SK-N-SH (cell line): ENCODE measurements at regions of chr12 and their contacts with region 1.

Region 1: GRCh38 chr12:3299929-3300832 is 190.8 kb upstream of the PRMT8 start:
- DNase-seq: peak; percentile 89
- H3K4me3 ChIP-seq: peak overlapping the region; percentile 15 to 56; a peak in 3 of 4 replicates
- H3K27ac ChIP-seq: peak overlapping the region in 1 of 2 experiments; percentile 69; a peak in 2 of 4 replicates
- H3K4me1 ChIP-seq: peaks cover 4 to 39% of the 10 kb centered on the region in 2 experiments; a peak in 3 of 4 replicates
- H3K27me3 ChIP-seq: no peaks in the 10 kb centered on the region
- CTCF ChIP-seq: peak; percentile 93
- EP300 ChIP-seq: peak in 1 of 2 experiments; percentile 51; a peak in 1 of 4 replicates
- RAD21 ChIP-seq: peak; percentile 87

Region 2: GRCh38 chr12:3135522-3136461 is 164.4 kb before region 1 on chr12:
- CTCF ChIA-PET with region 1: interaction called, 47 read pairs
- POLR2A ChIA-PET with region 1: no interaction called
- DNase-seq: peak; percentile 90
- H3K4me3 ChIP-seq: no peak overlapping the region; a peak in 1 of 4 replicates
- H3K27ac ChIP-seq: no peak overlapping the region
- H3K4me1 ChIP-seq: peaks cover 13 to 22% of the 10 kb centered on the region in 2 experiments; a peak in 3 of 4 replicates
- H3K27me3 ChIP-seq: no peaks in the 10 kb centered on the region
- CTCF ChIP-seq: peak; percentile 78
- EP300 ChIP-seq: no peak
- RAD21 ChIP-seq: peak; percentile 96

Region 3: DNA sequence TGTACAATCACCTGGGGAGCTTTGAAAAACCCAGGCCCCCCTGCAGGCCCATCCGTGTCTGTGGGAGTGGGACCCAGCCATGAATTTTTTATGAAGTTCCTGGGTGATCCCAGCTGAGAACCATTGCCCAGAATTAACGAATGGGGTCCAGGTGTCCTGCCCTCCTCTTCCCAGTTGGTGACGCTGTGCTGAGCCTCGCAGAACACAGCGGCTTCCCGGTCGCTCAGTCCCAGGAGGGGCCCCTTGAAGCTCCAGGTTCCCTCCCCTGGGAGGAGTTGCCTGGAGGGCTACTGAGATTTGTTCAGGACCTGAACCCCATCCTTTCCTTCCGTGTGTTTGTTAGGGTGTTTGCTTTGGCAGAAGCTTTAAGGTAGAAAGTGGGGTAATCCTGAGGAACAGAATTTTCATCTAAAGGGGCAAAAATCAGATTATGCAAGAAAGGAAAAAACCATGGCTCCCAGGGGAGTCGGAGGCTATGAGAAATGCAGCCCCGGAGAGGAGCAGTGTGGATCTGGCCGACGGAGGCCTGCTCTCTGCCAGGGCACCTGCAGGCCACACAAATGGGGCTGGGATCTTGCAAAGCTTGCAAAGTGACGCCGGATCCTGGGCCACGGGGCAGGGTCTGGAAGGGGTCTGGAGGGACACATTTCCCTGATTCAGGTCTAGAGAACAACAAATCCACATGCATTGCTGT is 26.1 kb after region 1 on chr12:
- CTCF ChIA-PET with region 1: interaction called, 63 read pairs
- POLR2A ChIA-PET with region 1: no interaction called
- DNase-seq: no peak
- H3K4me3 ChIP-seq: no peak overlapping the region
- H3K27ac ChIP-seq: no peak overlapping the region
- H3K4me1 ChIP-seq: peaks cover 0 to 6% of the 10 kb centered on the region in 2 experiments; a peak in 1 of 4 replicates
- H3K27me3 ChIP-seq: peaks cover 11% of the 10 kb centered on the region
- CTCF ChIP-seq: no peak
- EP300 ChIP-seq: no peak
- RAD21 ChIP-seq: no peak

Region 4: GRCh38 chr12:3453990-3454675 is 154.0 kb after region 1 on chr12:
- CTCF ChIA-PET with region 1: interaction called, 26 read pairs
- POLR2A ChIA-PET with region 1: no interaction called
- DNase-seq: no peak
- H3K4me3 ChIP-seq: no peak overlapping the region
- H3K27ac ChIP-seq: no peak overlapping the region
- H3K4me1 ChIP-seq: no peaks in the 10 kb centered on the region
- H3K27me3 ChIP-seq: no peaks in the 10 kb centered on the region
- CTCF ChIP-seq: no peak
- EP300 ChIP-seq: no peak
- RAD21 ChIP-seq: no peak

Region 5: GRCh38 chr12:3629057-3629830 is 329.1 kb after region 1 on chr12:
- CTCF ChIA-PET with region 1: interaction called, 12 read pairs
- POLR2A ChIA-PET with region 1: no interaction called
- DNase-seq: no peak
- H3K4me3 ChIP-seq: no peak overlapping the region
- H3K27ac ChIP-seq: no peak overlapping the region
- H3K4me1 ChIP-seq: peaks cover 0 to 24% of the 10 kb centered on the region in 2 experiments; a peak in 1 of 4 replicates
- H3K27me3 ChIP-seq: no peaks in the 10 kb centered on the region; the same call in 1 of the 2 replicates
- CTCF ChIP-seq: no peak
- EP300 ChIP-seq: no peak
- RAD21 ChIP-seq: no peak

Region 6: DNA sequence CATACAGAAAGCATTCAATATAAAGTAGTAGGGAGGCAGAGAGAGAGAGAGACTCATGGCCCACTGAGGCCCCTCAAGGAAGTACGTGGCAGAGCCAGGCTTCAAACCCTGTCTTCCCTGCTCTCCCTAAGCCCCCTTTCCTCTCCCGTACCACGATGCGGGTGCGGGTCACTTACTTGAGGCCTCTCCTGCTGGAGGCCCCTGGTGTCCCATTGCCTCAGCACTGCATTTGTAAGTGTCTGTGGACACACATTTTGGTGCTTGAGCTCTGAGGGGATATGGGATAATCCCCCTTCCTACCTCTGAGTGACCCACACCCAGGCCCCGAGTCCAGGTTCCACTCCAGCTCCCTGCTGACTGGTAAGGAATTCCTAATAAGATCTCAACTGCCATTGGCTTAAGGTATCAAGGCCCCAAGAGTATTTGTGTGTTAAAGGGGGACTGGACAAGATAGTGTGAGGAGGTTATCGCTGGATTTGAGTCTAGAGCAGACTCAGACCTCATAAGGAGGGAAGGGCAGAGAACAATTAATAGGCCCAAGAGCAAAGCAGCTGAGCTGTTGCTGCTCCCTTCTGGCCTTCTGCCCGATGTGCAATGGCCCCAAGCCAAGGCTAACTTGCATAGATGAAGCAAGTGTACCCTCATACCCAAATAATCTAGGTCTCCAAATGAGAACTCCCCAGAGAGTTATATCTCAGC is 380.9 kb after region 1 on chr12:
- CTCF ChIA-PET with region 1: interaction called, 95 read pairs
- POLR2A ChIA-PET with region 1: no interaction called
- DNase-seq: peak; percentile 51
- H3K4me3 ChIP-seq: no peak overlapping the region
- H3K27ac ChIP-seq: no peak overlapping the region
- H3K4me1 ChIP-seq: peaks cover 0 to 29% of the 10 kb centered on the region in 2 experiments; a peak in 2 of 4 replicates
- H3K27me3 ChIP-seq: no peaks in the 10 kb centered on the region; the same call in 1 of the 2 replicates
- CTCF ChIP-seq: peak; percentile 42
- EP300 ChIP-seq: no peak
- RAD21 ChIP-seq: peak; percentile 72

Region 7: GRCh38 chr12:3777206-3777809 is 477.1 kb after region 1 on chr12:
- CTCF ChIA-PET with region 1: interaction called, 203 read pairs
- POLR2A ChIA-PET with region 1: no interaction called
- DNase-seq: peak; percentile 61
- H3K4me3 ChIP-seq: no peak overlapping the region
- H3K27ac ChIP-seq: no peak overlapping the region
- H3K4me1 ChIP-seq: no peaks in the 10 kb centered on the region
- H3K27me3 ChIP-seq: peaks cover 12% of the 10 kb centered on the region; the same call in 1 of the 2 replicates
- CTCF ChIP-seq: peak; percentile 81
- EP300 ChIP-seq: no peak
- RAD21 ChIP-seq: peak; percentile 85